ENCODE measurements at regions of chr7 and their contacts with region 1.

Region 1: DNA sequence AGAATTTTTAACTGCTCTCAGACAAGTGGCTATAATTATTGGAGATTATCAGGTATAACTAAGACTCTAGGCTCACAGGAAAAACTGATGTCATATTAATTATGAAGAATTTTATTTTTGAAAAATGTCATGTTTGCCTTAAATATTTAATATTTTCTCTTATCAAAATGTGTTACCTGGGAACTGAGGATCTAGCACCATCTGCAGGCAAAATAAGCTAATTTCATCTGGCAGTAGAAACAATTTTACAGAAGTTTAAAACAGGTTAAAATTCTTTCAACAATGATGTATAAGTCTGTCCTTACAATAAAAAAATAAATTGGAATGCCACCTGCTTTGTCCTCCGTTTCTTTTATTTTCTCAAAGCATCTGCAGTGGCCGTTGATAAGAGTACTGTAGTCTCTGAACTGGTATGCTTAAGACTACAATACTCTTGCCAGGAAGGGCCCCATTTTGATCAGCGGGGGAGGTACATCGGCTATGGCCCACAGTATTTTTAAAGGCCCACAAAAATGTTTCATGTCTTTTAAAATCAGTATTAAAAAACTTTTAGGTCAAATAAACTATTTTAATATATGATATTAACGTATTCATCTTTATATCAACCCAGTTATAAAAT is 81.3 kb downstream of the VWDE start:
- DNase-seq: no peak
- H3K4me3 ChIP-seq: no peak overlapping the region
- H3K27ac ChIP-seq: no peak overlapping the region
- H3K4me1 ChIP-seq: no peaks in the 10 kb centered on the region
- H3K27me3 ChIP-seq: no peaks in the 10 kb centered on the region
- CTCF ChIP-seq: peak; percentile 39 to 52

Region 2: GRCh38 chr7:11427686-11428273 is 894.6 kb before region 1 on chr7:
- intact Hi-C with region 1: loop called (anchors 10 kb)
- DNase-seq: no peak
- H3K4me3 ChIP-seq: no peak overlapping the region
- H3K27ac ChIP-seq: no peak overlapping the region
- H3K4me1 ChIP-seq: no peaks in the 10 kb centered on the region
- H3K27me3 ChIP-seq: no peaks in the 10 kb centered on the region
- CTCF ChIP-seq: peak; percentile 37 to 50

Region 3: GRCh38 chr7:12004581-12004980 is 317.8 kb before region 1 on chr7:
- intact Hi-C with region 1: no loop called
- DNase-seq: no peak
- H3K4me3 ChIP-seq: no peak overlapping the region
- H3K27ac ChIP-seq: no peak overlapping the region
- H3K4me1 ChIP-seq: no peaks in the 10 kb centered on the region
- H3K27me3 ChIP-seq: no peaks in the 10 kb centered on the region
- CTCF ChIP-seq: no peak

Region 4: DNA sequence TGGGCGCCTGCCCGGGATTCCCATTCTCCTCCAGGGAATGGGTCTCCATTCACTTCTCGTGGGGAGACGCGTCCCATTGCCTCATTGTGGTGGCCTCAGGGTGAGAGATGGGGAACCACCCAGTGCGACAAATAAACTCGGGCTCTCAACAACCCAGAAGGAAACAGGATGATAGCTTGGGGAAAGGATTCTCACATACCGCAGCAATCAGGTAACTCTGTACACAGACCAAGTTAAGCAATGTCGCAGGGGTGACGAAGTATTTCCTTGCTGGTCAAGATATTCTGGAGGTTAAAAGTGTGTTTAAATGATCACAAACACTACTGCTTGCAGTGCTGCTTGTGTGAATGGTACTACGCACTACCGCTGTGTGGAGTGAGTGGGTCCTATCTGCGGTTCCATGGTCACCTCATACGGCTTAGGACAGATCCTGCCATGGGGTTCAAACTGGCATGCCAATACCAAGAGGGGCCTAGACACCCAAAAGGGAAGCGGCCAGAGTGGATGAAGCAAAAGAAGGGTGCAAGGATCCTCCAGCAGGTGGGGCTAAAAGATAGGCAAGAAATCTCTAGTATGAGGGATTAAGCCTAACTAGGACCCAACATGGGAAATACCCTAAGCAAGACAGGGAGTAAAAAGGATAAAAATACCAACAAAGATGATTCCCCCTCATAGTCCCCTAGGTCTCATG is 255.1 kb before region 1 on chr7:
- intact Hi-C with region 1: loop called (anchors 5 kb)
- DNase-seq: no peak
- H3K4me3 ChIP-seq: no peak overlapping the region
- H3K27ac ChIP-seq: no peak overlapping the region
- H3K4me1 ChIP-seq: no peaks in the 10 kb centered on the region
- H3K27me3 ChIP-seq: no peaks in the 10 kb centered on the region
- CTCF ChIP-seq: peak; percentile 19 to 20

Measured in tibial artery (tissue), 4 donors.